ENCODE measurements at regions of chr1 and their contacts with region 1.

Region 1: GRCh38 chr1:47409311-47410070 is 6.6 kb upstream of the FOXE3 start:
- DNase-seq: peak in 1 of 2 donors; percentile 36
- H3K4me3 ChIP-seq: no peak overlapping the region
- H3K27ac ChIP-seq: no peak overlapping the region
- H3K4me1 ChIP-seq: no peaks in the 10 kb centered on the region
- H3K27me3 ChIP-seq: peaks cover 0 to 5% of the 10 kb centered on the region in 2 donors
- CTCF ChIP-seq: no peak
- POLR2A ChIP-seq: no peak

Region 2: DNA sequence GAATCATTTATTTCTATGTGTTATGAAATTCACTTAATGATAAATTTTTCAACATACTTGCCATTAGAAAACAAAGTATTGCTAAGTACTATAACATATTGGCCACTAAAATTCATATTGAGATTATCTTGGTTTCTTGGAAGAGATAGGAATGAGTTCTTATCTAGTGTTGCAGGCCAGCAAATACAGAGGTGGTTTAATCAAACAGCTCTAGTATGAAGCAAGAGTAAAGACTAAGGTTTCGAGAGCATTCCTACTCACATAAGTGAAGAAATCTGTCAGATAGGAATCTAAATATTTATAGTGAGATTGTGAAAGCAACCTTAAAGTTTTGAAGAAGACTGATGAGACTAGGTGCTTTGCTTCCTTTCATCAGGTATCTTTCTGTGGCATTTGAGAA is 31.3 kb before region 1 on chr1:
- intact Hi-C with region 1: no loop called
- DNase-seq: no peak
- H3K4me3 ChIP-seq: no peak overlapping the region
- H3K27ac ChIP-seq: no peak overlapping the region
- H3K4me1 ChIP-seq: no peaks in the 10 kb centered on the region
- H3K27me3 ChIP-seq: no peaks in the 10 kb centered on the region
- CTCF ChIP-seq: no peak
- POLR2A ChIP-seq: no peak

Region 3: GRCh38 chr1:47578026-47578720 is 168.7 kb after region 1 on chr1:
- intact Hi-C with region 1: no loop called
- DNase-seq: peak; percentile 26 to 48
- H3K4me3 ChIP-seq: peak overlapping the region in 1 of 3 donors; percentile 44
- H3K27ac ChIP-seq: peak overlapping the region; percentile 60 to 83
- H3K4me1 ChIP-seq: peaks cover 0 to 4% of the 10 kb centered on the region in 2 donors
- H3K27me3 ChIP-seq: peaks cover 0 to 4% of the 10 kb centered on the region in 2 donors
- CTCF ChIP-seq: no peak
- POLR2A ChIP-seq: no peak

Region 4: GRCh38 chr1:48402599-48402998 is 993.1 kb after region 1 on chr1:
- intact Hi-C with region 1: loop called (anchors 5 kb)
- DNase-seq: no peak
- H3K4me3 ChIP-seq: no peak overlapping the region
- H3K27ac ChIP-seq: no peak overlapping the region
- H3K4me1 ChIP-seq: no peaks in the 10 kb centered on the region
- H3K27me3 ChIP-seq: no peaks in the 10 kb centered on the region
- CTCF ChIP-seq: no peak
- POLR2A ChIP-seq: no peak

Measured in breast epithelium (tissue), 4 donors.